HEK293 (cell line): ENCODE measurements at regions of chr6 and their contacts with region 1.

Region 1: DNA sequence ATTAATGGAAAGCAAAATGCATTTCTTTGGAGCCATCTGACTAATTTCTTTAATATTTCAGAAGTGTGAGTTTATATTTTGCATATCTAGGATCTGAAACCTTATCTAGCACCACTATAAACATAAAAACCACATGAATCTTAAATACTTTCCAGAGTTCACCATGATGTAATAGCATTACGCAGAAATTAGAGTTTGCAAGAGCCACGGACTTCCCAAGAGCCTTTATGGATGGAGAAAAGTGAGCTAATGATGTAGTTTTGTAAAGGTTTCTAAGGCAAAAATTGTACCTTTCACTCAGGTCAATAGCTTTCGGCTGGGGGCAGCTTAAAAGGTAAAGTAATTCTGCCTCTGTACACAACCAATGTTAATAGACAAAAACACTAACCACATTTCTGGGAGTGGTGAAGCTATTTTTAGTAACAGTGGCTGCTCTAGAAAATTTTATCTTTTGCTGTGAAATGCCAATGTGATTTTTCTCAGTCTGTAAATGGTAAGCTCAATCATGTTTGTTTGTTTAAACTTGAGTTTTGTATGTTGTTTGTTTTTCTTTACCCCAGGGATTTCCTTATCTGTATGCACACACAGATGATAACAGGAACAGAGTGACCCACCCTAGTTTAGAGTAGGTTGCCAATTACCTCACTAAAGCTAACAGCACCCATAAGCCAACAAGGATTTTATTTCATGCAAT is 80.5 kb downstream of the FILIP1 start:
- H3K4me3 ChIP-seq: no peak overlapping the region
- H3K27ac ChIP-seq: peak overlapping the region; percentile 63
- H3K4me1 ChIP-seq: peaks cover 25% of the 10 kb centered on the region
- CTCF ChIP-seq: no peak

Region 2: DNA sequence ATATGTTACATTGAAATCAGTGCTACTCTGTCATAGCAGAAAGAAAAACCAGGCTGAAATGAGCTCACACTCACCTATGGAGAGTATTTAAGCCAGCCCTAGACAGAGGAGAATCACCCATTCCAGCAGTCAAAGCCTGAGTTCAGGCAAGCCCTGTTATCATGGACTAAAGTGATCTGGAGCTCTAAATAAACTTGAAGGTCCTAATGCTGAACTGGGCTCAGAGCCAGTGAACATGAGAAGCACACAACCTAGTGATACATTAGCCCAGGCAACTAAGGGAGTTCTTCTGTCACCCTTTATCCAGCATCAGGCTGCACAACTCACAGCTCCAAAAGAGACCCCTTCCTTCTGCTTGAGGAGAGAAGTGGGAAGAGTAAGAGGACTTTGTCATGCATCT is 632.3 kb before region 1 on chr6:
- CTCF ChIA-PET with region 1: no interaction called
- POLR2A ChIA-PET with region 1: no interaction called
- H3K4me3 ChIP-seq: no peak overlapping the region
- H3K27ac ChIP-seq: no peak overlapping the region
- H3K4me1 ChIP-seq: no peaks in the 10 kb centered on the region
- CTCF ChIP-seq: no peak

Region 3: GRCh38 chr6:75381877-75382633 is 31.1 kb before region 1 on chr6:
- CTCF ChIA-PET with region 1: interaction called, 6 read pairs
- POLR2A ChIA-PET with region 1: interaction called, 11 read pairs
- H3K4me3 ChIP-seq: no peak overlapping the region
- H3K27ac ChIP-seq: no peak overlapping the region
- H3K4me1 ChIP-seq: peaks cover 12% of the 10 kb centered on the region
- CTCF ChIP-seq: no peak

Region 4: DNA sequence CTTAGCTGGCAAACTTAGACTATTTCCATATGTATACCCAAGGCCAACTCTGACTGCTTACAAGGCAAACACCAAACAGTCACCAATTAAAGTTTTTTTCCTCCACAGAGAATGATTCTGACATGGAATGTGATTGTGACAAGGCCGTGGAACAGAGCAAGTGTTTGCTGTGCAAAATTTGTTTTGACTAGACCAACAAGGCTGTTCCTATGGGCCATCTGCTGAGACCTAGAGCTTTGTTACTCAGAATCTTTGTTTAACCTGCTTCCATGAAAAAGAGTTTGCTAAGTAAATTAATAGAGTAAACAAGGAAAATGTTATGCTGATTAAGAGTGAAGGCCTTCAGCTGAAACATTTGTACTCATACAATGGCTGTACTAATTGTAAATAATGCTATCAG is 710.9 kb after region 1 on chr6:
- CTCF ChIA-PET with region 1: no interaction called
- POLR2A ChIA-PET with region 1: no interaction called
- H3K4me3 ChIP-seq: no peak overlapping the region
- H3K27ac ChIP-seq: no peak overlapping the region
- H3K4me1 ChIP-seq: no peaks in the 10 kb centered on the region; the same call in 1 of the 2 replicates
- CTCF ChIP-seq: no peak